Activated CD4-positive, alpha-beta memory T cell treated with anti-CD3 and anti-CD28 coated beads for 36 hours (primary cell): ENCODE measurements at regions of chr9 and their contacts with region 1.

Region 1: DNA sequence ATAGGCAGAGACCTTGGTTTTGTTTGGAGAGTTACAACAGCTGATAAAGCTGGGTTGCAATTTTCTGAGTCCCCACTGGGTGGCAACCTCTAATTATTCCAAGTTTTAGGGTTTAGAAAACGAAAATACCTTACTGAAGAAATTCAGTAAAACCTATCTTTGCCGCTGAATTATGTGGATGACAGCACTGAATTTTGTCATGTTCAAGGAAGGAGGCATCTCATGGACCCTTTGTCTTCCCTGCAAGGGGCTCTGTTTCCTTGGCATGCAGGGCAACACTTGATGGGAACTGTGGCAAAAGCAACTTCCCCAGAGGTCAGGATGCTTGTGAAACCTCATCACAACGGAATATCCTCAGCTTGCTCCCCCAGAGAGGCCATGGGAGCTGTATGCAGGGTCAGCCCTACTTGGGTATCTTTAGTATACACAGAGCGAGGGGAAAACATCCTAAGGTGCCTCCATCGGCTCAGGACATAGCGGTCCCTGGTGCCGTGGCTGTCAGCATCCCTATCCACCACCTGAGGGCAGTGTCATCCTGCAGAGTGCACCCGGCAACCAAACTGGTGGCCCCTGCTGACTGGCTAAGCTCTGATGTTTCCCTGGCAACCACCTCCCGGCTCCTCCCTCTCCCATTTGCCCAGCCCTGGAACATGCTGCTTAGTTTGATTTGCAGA is 123.1 kb downstream of the RXRA start:
- DNase-seq: peak; percentile 89
- H3K4me3 Mint-ChIP-seq: no peak overlapping the region
- H3K27ac Mint-ChIP-seq: no peak overlapping the region
- H3K4me1 Mint-ChIP-seq: no peaks in the 10 kb centered on the region
- H3K27me3 Mint-ChIP-seq: no peaks in the 10 kb centered on the region

Region 2: GRCh38 chr9:134150557-134151214 is 298.7 kb before region 1 on chr9:
- CTCF ChIA-PET with region 1: no interaction called
- POLR2A ChIA-PET with region 1: no interaction called
- intact Hi-C with region 1: no loop called
- DNase-seq: no peak
- H3K4me3 Mint-ChIP-seq: no peak overlapping the region
- H3K27ac Mint-ChIP-seq: no peak overlapping the region
- H3K4me1 Mint-ChIP-seq: no peaks in the 10 kb centered on the region
- H3K27me3 Mint-ChIP-seq: no peaks in the 10 kb centered on the region

Region 3: GRCh38 chr9:134185536-134186011 is 263.8 kb before region 1 on chr9:
- CTCF ChIA-PET with region 1: no interaction called
- POLR2A ChIA-PET with region 1: no interaction called
- intact Hi-C with region 1: no loop called
- DNase-seq: peak; percentile 48
- H3K4me3 Mint-ChIP-seq: no peak overlapping the region
- H3K27ac Mint-ChIP-seq: no peak overlapping the region
- H3K4me1 Mint-ChIP-seq: peaks cover 21% of the 10 kb centered on the region
- H3K27me3 Mint-ChIP-seq: peaks cover under 1% of the 10 kb centered on the region

Region 4: GRCh38 chr9:134641173-134641985 is 192.0 kb after region 1 on chr9 and contains the start of gene COL5A1:
- CTCF ChIA-PET with region 1: no interaction called
- POLR2A ChIA-PET with region 1: no interaction called
- intact Hi-C with region 1: loop called (anchors 10 kb)
- DNase-seq: peak; percentile 39
- H3K4me3 Mint-ChIP-seq: peak within 1 kb of the TSS; percentile 23
- H3K27ac Mint-ChIP-seq: no peak within 1 kb of the TSS
- H3K4me1 Mint-ChIP-seq: peaks cover 2% of the 10 kb centered on the region
- H3K27me3 Mint-ChIP-seq: peaks cover 23% of the 10 kb centered on the region
- total RNA-seq, gene COL5A1: 0.12 to 0.19 TPM

Region 5: DNA sequence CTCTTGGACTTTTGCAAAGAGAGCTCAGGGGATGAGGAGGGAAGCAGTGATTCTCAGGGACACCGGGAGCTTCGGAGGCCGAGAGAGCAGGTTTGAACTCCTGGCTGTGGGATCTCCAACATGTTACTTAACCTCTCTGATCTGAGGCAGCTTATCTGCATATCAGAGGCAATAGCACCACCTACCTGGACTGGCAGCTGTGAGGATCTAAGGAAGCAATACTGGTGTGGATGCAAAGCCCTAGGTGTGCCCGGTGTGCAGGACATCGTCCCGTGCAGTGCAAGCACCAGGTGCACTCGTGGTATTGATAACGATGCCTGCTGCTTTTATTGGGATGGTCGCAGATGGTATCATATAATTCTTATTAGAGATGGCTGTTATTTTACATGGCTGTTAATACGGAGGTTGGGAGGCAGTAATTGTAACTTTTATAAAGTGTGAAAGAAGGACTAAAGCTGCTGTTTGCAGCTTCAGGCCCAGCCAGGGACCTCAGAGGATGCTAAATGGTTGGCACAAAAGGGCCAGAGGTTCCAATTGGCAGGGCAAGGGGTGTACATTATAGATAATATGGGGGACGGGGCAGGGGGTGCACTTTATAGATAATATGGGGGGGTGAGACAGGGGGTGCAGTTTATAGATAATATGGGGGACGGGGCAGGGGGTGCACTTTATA is 207.1 kb after region 1 on chr9:
- CTCF ChIA-PET with region 1: interaction called, 10 read pairs
- POLR2A ChIA-PET with region 1: no interaction called
- intact Hi-C with region 1: no loop called
- DNase-seq: no peak
- H3K4me3 Mint-ChIP-seq: no peak overlapping the region
- H3K27ac Mint-ChIP-seq: no peak overlapping the region
- H3K4me1 Mint-ChIP-seq: no peaks in the 10 kb centered on the region
- H3K27me3 Mint-ChIP-seq: no peaks in the 10 kb centered on the region

Region 6: DNA sequence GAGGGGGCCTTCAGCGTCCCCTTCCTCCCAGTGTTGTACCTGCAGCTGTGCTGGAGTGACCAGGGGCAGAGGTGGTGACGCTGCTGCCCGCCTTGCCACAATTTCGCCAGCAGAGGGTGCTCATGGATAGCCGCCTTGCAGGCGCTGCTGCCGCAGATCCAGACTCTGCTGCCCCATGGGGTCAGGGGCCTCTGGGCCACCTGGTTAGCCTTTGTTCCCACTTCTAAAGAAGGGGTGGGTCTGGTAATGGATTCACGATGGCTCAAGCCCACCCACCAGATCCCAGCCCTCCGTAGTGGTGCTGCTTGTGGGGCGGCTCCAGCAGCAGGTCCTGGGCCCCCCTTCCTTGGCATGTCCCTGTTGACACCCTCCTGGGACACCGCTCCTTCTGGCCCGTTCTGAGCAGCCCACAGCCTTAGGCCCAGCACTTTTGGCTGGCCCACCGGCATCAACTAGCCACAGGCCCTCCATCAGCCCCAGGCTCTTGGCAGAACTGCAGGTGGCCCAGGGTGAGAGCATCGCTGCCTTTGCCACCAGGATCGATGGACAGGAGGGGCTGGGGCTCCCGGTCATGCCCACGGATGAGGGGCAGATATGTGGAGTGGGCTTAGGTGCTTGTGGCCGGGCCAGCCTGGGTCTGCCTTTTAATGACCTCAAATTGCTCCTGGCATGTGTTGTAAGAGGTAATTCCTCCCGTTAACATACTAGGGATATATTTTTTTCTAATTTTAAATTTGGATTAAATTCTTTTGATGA is 249.4 kb after region 1 on chr9:
- CTCF ChIA-PET with region 1: no interaction called
- POLR2A ChIA-PET with region 1: no interaction called
- intact Hi-C with region 1: loop called (anchors 2 kb)
- DNase-seq: peak; percentile 72
- H3K4me3 Mint-ChIP-seq: no peak overlapping the region
- H3K27ac Mint-ChIP-seq: no peak overlapping the region
- H3K4me1 Mint-ChIP-seq: no peaks in the 10 kb centered on the region
- H3K27me3 Mint-ChIP-seq: peaks cover 4% of the 10 kb centered on the region

Region 7: GRCh38 chr9:134858051-134858841 is 408.9 kb after region 1 on chr9:
- CTCF ChIA-PET with region 1: no interaction called
- POLR2A ChIA-PET with region 1: no interaction called
- intact Hi-C with region 1: loop called (anchors 2 kb)
- DNase-seq: peak; percentile 81
- H3K4me3 Mint-ChIP-seq: peak overlapping the region; percentile 54
- H3K27ac Mint-ChIP-seq: peak overlapping the region; percentile 91
- H3K4me1 Mint-ChIP-seq: peaks cover 17% of the 10 kb centered on the region
- H3K27me3 Mint-ChIP-seq: peaks cover 42% of the 10 kb centered on the region